ENCODE measurements at regions of chr10 and their contacts with region 1.

Region 1: GRCh38 chr10:62183442-62183841 is 85.2 kb downstream of the RTKN2 start:
- DNase-seq: peak in 8 of 9 donors; percentile 45 to 95 (median 90)
- ATAC-seq: peak; percentile 96
- H3K4me3 ChIP-seq: no peak overlapping the region
- H3K4me3 Mint-ChIP-seq: peak overlapping the region; percentile 10 to 77 (median 62)
- H3K27ac ChIP-seq: peak overlapping the region; percentile 74
- H3K27ac Mint-ChIP-seq: peak overlapping the region; percentile 84 to 98 (median 93)
- H3K4me1 ChIP-seq: peaks cover 36 to 67% of the 10 kb centered on the region in 2 donors
- H3K4me1 Mint-ChIP-seq: peaks cover 28 to 99% (median 87%) of the 10 kb centered on the region in 7 donors
- H3K27me3 ChIP-seq: no peaks in the 10 kb centered on the region
- H3K27me3 Mint-ChIP-seq: no peaks in the 10 kb centered on the region

Region 2: DNA sequence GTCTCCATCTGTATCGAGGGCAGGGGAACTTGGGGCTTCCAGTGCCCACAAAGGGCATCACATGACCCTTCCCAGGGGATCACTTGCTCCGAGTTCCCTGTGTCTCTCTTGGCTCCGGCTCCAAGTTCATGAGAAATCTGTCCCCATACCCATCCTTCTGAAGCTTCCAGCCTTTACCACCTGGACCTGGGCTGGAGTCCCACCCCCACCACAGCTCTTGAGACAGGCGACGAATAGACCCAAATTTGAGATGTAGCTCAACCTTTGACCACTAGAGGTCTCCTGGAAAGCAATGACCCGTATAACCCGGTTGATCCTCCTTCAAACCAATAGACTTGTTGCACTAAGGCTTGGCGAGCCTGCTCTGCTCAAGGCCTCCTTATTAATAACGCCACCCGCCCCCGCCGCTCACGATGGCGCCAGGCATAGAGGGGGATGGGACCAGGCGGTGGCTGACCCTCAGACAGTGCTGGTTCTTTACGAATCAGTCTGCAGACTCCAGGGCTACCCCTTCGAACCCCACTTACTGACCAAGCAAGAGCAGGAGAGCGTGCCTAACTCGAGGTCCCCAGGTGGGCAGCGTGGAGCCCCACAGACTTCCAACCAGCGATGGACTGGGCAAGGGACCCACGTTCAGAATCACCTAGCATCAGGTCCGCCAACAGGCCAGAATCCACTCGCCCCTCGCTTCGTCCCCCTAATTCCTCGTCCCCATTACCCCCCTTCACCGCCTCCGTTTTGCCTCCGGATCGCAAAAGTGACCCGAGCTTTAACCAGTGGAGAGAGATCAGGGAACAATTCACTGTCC is 286.4 kb before region 1 on chr10:
- CTCF ChIA-PET with region 1: no interaction called
- POLR2A ChIA-PET with region 1: interaction called, 20 read pairs
- intact Hi-C with region 1: loop called (anchors 1 kb)
- DNase-seq: peak; percentile 20 to 76 (median 66)
- ATAC-seq: peak; percentile 80
- H3K4me3 ChIP-seq: peak overlapping the region; percentile 51
- H3K4me3 Mint-ChIP-seq: peak overlapping the region; percentile 77 to 98 (median 86)
- H3K27ac ChIP-seq: no peak overlapping the region
- H3K27ac Mint-ChIP-seq: peak overlapping the region; percentile 46 to 99 (median 86)
- H3K4me1 ChIP-seq: peaks cover 18 to 27% of the 10 kb centered on the region in 2 donors
- H3K4me1 Mint-ChIP-seq: peaks cover 12 to 35% (median 33%) of the 10 kb centered on the region in 7 donors
- H3K27me3 ChIP-seq: no peaks in the 10 kb centered on the region
- H3K27me3 Mint-ChIP-seq: no peaks in the 10 kb centered on the region

Region 3: GRCh38 chr10:61992671-61993668 is 190.5 kb before region 1 on chr10:
- CTCF ChIA-PET with region 1: no interaction called
- POLR2A ChIA-PET with region 1: no interaction called
- intact Hi-C with region 1: loop called (anchors 1 to 5 kb)
- DNase-seq: peak in 8 of 9 donors; percentile 39 to 85 (median 72)
- ATAC-seq: peak; percentile 90
- H3K4me3 ChIP-seq: peak overlapping the region; percentile 28
- H3K4me3 Mint-ChIP-seq: peak overlapping the region in 9 of 10 donors; percentile 61 to 89 (median 64)
- H3K27ac ChIP-seq: peak overlapping the region; percentile 63
- H3K27ac Mint-ChIP-seq: peak overlapping the region; percentile 82 to 96 (median 93)
- H3K4me1 ChIP-seq: peaks cover 33 to 37% of the 10 kb centered on the region in 2 donors
- H3K4me1 Mint-ChIP-seq: peaks cover 28 to 81% (median 70%) of the 10 kb centered on the region in 7 donors
- H3K27me3 ChIP-seq: no peaks in the 10 kb centered on the region
- H3K27me3 Mint-ChIP-seq: no peaks in the 10 kb centered on the region

Region 4: DNA sequence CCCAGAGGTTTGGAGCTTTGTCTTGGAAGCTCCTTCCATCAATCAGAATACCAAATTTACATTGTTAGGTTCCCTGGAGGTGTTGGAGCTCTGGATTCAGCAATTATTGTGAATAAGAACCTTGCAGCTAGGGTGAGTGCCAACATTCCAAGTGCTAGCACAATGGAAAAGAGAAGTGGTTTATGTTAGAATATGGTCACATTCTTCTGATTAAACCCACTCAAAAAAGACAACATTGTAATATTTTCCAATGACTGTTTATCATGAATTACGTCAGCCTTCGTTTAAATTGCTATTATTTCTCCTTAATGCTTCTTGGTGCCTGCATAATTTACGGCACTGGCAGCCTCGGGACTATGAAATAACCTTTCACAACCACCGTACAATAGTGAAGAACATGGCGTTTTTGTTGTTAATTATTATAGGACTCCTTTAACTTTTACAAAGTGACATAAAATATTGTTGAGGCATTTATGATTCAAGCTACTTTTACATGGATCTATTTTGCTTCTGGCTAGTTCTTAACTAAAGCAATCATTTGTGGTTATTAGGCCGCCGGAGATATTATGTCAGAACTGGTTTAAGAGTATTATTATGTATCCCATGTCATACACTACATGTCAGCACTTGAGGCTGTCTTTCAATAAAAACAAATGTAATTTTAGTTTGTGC is 164.3 kb before region 1 on chr10:
- CTCF ChIA-PET with region 1: no interaction called
- POLR2A ChIA-PET with region 1: no interaction called
- intact Hi-C with region 1: no loop called
- DNase-seq: no peak
- ATAC-seq: no peak
- H3K4me3 ChIP-seq: no peak overlapping the region
- H3K4me3 Mint-ChIP-seq: no peak overlapping the region
- H3K27ac ChIP-seq: no peak overlapping the region
- H3K27ac Mint-ChIP-seq: peak overlapping the region in 2 of 9 donors; percentile 26 to 31
- H3K4me1 ChIP-seq: no peaks in the 10 kb centered on the region
- H3K4me1 Mint-ChIP-seq: peaks cover 22 to 70% (median 52%) of the 10 kb centered on the region in 7 donors
- H3K27me3 ChIP-seq: no peaks in the 10 kb centered on the region
- H3K27me3 Mint-ChIP-seq: no peaks in the 10 kb centered on the region

Region 5: DNA sequence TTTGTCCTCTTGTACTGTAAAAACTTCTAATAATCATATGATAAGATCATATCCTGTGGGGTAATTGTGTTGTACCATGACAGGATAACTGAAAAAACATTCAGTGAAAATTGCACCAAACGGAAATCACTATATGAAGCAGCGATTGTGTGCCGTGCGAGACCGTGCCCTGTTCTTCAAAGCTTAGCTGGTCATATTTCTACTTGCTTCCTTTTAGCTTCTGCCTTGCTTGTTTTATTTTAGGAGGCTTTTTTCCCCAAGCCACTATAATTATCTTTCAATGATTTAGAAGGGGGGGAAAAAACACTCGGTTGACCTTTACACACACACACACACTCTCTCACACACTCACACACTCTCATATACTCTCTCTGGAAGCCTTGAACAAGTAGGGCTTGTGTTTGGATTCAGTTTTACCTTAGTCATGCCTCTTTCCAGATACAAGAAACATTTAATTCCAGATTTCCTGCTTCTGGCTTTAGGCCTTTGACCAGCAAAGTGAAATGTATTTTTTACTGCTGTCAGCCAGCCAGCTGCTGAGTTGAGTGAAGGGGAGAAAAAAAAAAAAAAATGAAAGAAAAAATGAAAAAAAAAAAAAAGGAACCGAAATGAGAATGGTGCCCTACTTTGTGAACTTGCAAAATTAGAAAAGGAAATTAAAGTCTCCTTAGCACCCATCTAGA is 100.6 kb before region 1 on chr10:
- CTCF ChIA-PET with region 1: interaction called, 3 read pairs
- POLR2A ChIA-PET with region 1: interaction called, 5 read pairs
- intact Hi-C with region 1: loop called (anchors 1 kb)
- DNase-seq: peak in 7 of 9 donors; percentile 23 to 70 (median 53)
- ATAC-seq: peak; percentile 83
- H3K4me3 ChIP-seq: peak overlapping the region; percentile 35
- H3K4me3 Mint-ChIP-seq: peak overlapping the region; percentile 46 to 79 (median 72)
- H3K27ac ChIP-seq: peak overlapping the region; percentile 63
- H3K27ac Mint-ChIP-seq: peak overlapping the region; percentile 69 to 92 (median 87)
- H3K4me1 ChIP-seq: peaks cover 23 to 41% of the 10 kb centered on the region in 2 donors
- H3K4me1 Mint-ChIP-seq: peaks cover 28 to 72% (median 58%) of the 10 kb centered on the region in 7 donors
- H3K27me3 ChIP-seq: no peaks in the 10 kb centered on the region
- H3K27me3 Mint-ChIP-seq: no peaks in the 10 kb centered on the region

Region 6: GRCh38 chr10:62149621-62150020 is 33.8 kb before region 1 on chr10:
- CTCF ChIA-PET with region 1: no interaction called
- POLR2A ChIA-PET with region 1: interaction called, 3 read pairs
- intact Hi-C with region 1: loop called in 1 of 2 experiments (anchors 5 kb)
- DNase-seq: no peak
- ATAC-seq: no peak
- H3K4me3 ChIP-seq: no peak overlapping the region
- H3K4me3 Mint-ChIP-seq: no peak overlapping the region
- H3K27ac ChIP-seq: no peak overlapping the region
- H3K27ac Mint-ChIP-seq: peak overlapping the region in 1 of 9 donors; percentile 18
- H3K4me1 ChIP-seq: peaks cover 0 to 4% of the 10 kb centered on the region in 2 donors
- H3K4me1 Mint-ChIP-seq: peaks cover 5 to 20% (median 15%) of the 10 kb centered on the region in 7 donors
- H3K27me3 ChIP-seq: no peaks in the 10 kb centered on the region
- H3K27me3 Mint-ChIP-seq: no peaks in the 10 kb centered on the region

Region 7: DNA sequence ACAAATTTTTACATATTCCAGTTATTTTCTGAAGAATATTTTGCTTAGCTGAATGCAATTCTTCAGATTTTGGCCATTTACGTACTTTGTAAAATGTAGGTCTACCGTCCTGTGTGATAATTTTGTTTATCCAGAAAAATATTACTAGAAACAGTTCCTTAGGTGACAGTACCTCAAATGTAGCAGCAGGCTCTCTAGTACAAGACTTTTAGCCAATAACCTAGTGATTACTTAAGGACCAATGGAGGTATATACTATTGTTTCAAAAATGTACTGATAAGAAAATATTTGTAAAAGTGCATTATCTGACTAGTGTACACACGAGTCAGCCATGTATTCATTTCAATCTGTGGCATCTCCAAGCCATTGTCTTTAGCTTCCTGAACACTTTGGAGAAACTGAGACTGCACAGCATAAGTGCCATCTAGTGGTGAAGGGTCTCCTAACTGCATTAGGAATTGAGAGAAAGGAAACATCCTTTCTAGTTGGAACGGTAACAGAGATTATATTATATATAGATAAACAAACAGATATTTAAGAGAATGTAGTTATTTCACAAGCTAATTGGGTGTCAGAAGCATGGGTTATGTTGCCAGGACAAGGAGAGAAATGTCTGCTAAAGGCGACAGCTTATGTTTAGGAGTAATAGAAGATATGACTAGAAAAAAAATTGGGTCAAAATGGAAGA is 61.5 kb after region 1 on chr10:
- CTCF ChIA-PET with region 1: interaction called, 6 read pairs
- POLR2A ChIA-PET with region 1: interaction called, 5 read pairs
- intact Hi-C with region 1: loop called (anchors 1 kb)
- DNase-seq: peak in 8 of 9 donors; percentile 35 to 80 (median 68)
- ATAC-seq: peak; percentile 94
- H3K4me3 ChIP-seq: no peak overlapping the region
- H3K4me3 Mint-ChIP-seq: peak overlapping the region in 6 of 10 donors; percentile 16 to 64 (median 42)
- H3K27ac ChIP-seq: no peak overlapping the region
- H3K27ac Mint-ChIP-seq: peak overlapping the region in 8 of 9 donors; percentile 6 to 85 (median 53)
- H3K4me1 ChIP-seq: peaks cover 6 to 9% of the 10 kb centered on the region in 2 donors
- H3K4me1 Mint-ChIP-seq: peaks cover 9 to 37% (median 30%) of the 10 kb centered on the region in 7 donors
- H3K27me3 ChIP-seq: no peaks in the 10 kb centered on the region
- H3K27me3 Mint-ChIP-seq: no peaks in the 10 kb centered on the region

Region 8: DNA sequence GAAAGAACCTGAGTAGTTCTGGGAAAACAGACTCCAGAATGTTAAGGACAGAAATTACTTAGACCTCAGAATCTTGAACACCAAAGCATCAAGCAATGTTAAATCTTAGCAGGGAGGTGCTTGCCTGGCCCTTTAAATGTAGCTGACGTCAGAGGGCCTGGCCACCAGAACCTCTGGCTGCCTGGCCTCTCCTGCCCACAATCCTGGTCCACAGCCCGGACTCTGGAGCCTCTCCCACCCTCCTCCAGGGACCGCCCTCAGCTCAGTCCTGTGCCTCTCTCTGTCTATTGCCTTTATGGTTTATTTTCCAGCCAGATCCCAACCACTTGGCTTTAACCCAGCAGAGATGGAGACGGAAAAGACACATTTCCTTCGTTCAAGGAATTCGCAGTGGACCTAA is 674.9 kb after region 1 on chr10:
- CTCF ChIA-PET with region 1: no interaction called
- POLR2A ChIA-PET with region 1: no interaction called
- intact Hi-C with region 1: loop called in 1 of 2 experiments (anchors 1 kb)
- DNase-seq: no peak
- ATAC-seq: no peak
- H3K4me3 ChIP-seq: no peak overlapping the region
- H3K4me3 Mint-ChIP-seq: no peak overlapping the region
- H3K27ac ChIP-seq: no peak overlapping the region
- H3K27ac Mint-ChIP-seq: no peak overlapping the region
- H3K4me1 ChIP-seq: peaks cover 0 to 38% of the 10 kb centered on the region in 2 donors
- H3K4me1 Mint-ChIP-seq: peaks cover 13 to 54% (median 24%) of the 10 kb centered on the region in 7 donors
- H3K27me3 ChIP-seq: no peaks in the 10 kb centered on the region
- H3K27me3 Mint-ChIP-seq: peaks cover 0 to 18% (median 13%) of the 10 kb centered on the region in 5 donors

Measured in naive thymus-derived CD4-positive, alpha-beta T cell (primary cell).